ENCODE measurements at regions of chr16 and their contacts with region 1.

Region 1: GRCh38 chr16:87387942-87388817 is 4.0 kb upstream of the MAP1LC3B start:
- DNase-seq: peak; percentile 78 to 98 (median 95)
- H3K4me3 ChIP-seq: peak overlapping the region in 58 of 59 donors; percentile 20 to 68 (median 47)
- H3K27ac ChIP-seq: peak overlapping the region; percentile 89 to 100 (median 97)
- H3K27me3 ChIP-seq: no peaks in the 10 kb centered on the region
- CTCF ChIP-seq: peak in 12 of 56 donors; percentile 7 to 39 (median 24)

Region 2: GRCh38 chr16:86554917-86555703 is 833.1 kb before region 1 on chr16 and contains the start of gene MTHFSD:
- intact Hi-C with region 1: loop called (anchors 10 kb)
- DNase-seq: peak; percentile 79 to 96 (median 88)
- H3K4me3 ChIP-seq: peak within 1 kb of the TSS; percentile 72 to 100 (median 93)
- H3K27ac ChIP-seq: peak within 1 kb of the TSS in 57 of 59 donors; percentile 6 to 94 (median 82)
- H3K27me3 ChIP-seq: peaks cover 0 to 13% (median 0%) of the 10 kb centered on the region in 45 donors
- CTCF ChIP-seq: peak in 39 of 56 donors; percentile 4 to 61 (median 24)
- total RNA-seq, gene MTHFSD: 13.7 to 33.9 (median 23.1) TPM

Region 3: GRCh38 chr16:87316923-87317749 is 71.0 kb before region 1 on chr16 and contains the start of gene C16orf95:
- intact Hi-C with region 1: loop called (anchors 2 kb)
- DNase-seq: peak; percentile 93 to 98 (median 97)
- H3K4me3 ChIP-seq: peak within 1 kb of the TSS; percentile 68 to 100 (median 93)
- H3K27ac ChIP-seq: peak within 1 kb of the TSS; percentile 67 to 98 (median 94)
- H3K27me3 ChIP-seq: no peaks in the 10 kb centered on the region
- CTCF ChIP-seq: peak; percentile 37 to 79 (median 62)
- total RNA-seq, gene C16orf95: 3.5 to 15.9 (median 8.1) TPM

Region 4: DNA sequence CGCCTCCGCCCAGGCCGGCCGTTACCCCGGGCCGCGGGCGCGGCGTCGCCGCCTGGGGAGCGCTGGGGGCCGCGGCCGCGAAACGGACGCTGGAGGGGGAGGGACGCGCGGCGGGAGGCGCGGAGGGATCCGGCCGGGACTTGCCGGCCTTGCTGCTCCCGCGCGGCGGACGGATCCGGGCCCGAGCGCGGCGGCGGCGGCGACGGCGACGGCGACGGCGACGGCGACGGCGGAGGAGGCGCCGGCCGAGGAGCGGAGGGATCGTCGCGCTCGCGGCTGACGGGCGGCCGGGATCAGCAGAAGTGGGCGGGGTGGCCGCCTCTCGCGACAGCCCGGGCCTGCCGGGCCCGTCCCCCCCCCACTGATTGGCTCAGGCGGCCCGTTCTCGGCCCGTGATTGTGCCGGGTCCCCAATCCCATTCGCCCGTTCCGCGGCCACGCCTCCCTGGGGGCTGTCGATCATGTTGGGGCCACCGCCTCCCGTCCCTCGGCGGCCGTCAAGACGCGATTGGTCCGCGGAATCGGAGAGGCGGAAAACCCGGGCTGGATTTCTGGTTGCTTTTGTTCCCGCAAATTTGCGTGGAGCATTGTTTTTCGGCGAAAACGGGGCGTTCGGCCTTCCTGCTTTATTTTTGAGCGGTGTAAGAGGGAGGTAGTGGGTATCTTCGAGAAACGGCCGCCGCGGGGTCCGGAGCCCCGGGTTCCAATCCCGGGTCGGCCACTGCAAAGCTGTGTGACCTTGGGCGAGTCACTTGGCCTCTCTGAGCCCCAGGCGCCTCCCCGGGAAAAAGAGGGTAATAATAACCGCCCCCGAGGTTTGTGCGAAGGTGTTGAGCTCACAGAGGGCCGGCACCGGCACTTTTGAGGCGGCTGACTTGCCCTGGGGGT is 104.8 kb after region 1 on chr16 and contains the start of gene ZCCHC14:
- intact Hi-C with region 1: loop called (anchors 5 kb)
- DNase-seq: peak; percentile 97 to 100 (median 99)
- H3K4me3 ChIP-seq: peak within 1 kb of the TSS; percentile 49 to 76 (median 64)
- H3K27ac ChIP-seq: peak within 1 kb of the TSS in 43 of 59 donors; percentile 8 to 81 (median 58)
- H3K27me3 ChIP-seq: no peaks in the 10 kb centered on the region
- CTCF ChIP-seq: peak in 14 of 56 donors; percentile 7 to 46 (median 17)
- total RNA-seq, gene ZCCHC14: 25.1 to 60.3 (median 37.0) TPM

Region 5: GRCh38 chr16:87765776-87766484 is 377.8 kb after region 1 on chr16 and contains the start of gene KLHDC4:
- intact Hi-C with region 1: loop called in 1 of 2 experiments (anchors 5 kb)
- DNase-seq: peak; percentile 86 to 94 (median 90)
- H3K4me3 ChIP-seq: peak within 1 kb of the TSS; percentile 70 to 100 (median 96)
- H3K27ac ChIP-seq: peak within 1 kb of the TSS in 56 of 59 donors; percentile 47 to 93 (median 79)
- H3K27me3 ChIP-seq: no peaks in the 10 kb centered on the region
- CTCF ChIP-seq: peak in 26 of 56 donors; percentile 9 to 52 (median 24)
- total RNA-seq, gene KLHDC4: 22.5 to 62.8 (median 39.0) TPM

Measured in dorsolateral prefrontal cortex (tissue), 120 donors.